Transverse colon (tissue), 4 donors: ENCODE measurements at regions of chr19 and their contacts with region 1.

Region 1: GRCh38 chr19:50357178-50358100 is 8.0 kb downstream of the NAPSA start:
- DNase-seq: peak; percentile 79
- H3K4me3 ChIP-seq: peak overlapping the region in 3 of 4 donors; percentile 13 to 52 (median 34)
- H3K27ac ChIP-seq: peak overlapping the region; percentile 79 to 84 (median 81)
- H3K4me1 ChIP-seq: peaks cover 0 to 11% (median 9%) of the 10 kb centered on the region in 4 donors
- H3K27me3 ChIP-seq: no peaks in the 10 kb centered on the region
- CTCF ChIP-seq: peak; percentile 88 to 93 (median 92)
- EP300 ChIP-seq: no peak
- POLR2A ChIP-seq: peak; percentile 14

Region 2: DNA sequence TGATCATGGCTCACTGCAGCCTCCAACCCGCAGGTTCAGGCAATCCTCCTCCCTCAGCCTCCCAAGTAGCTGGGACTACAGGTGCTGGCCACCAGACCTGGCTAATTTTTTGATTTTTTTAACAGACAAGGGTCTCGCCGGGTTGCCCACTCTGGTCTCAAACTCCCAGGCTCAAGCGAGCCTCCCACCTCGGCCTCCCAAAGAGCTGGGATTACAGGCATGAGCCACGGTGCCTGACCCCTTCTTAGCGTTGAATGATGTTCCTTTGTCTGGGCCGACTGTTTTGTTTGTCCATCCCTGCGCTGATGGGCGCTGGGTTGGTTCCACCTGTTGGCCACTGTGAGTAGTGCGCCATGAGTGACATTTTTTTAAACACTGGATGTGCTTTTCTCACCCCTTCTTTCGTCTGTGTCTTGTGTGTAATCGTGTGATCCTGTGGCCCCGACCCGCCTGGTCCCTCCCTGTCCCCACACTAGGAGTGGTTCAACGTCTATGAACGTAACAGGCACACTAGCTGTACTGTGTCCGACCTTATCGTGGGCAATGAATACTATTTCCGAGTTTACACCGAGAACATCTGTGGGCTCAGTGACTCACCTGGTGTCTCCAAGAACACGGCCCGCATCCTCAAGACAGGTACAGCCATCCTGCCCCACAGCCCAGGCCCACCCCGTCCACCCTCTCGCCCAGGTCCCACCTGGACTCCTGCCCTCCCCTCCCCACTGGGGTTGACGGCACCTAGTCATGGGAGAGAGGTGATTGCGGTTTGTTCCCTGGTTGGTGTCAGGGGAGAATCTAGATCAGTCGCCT is 103.8 kb after region 1 on chr19:
- in situ Hi-C with region 1: loop called in 3 of 4 experiments (anchors 10 to 25 kb)
- intact Hi-C with region 1: no loop called
- DNase-seq: peak; percentile 73
- H3K4me3 ChIP-seq: no peak overlapping the region
- H3K27ac ChIP-seq: no peak overlapping the region
- H3K4me1 ChIP-seq: peaks cover 0 to under 1% (median 0%) of the 10 kb centered on the region in 4 donors
- H3K27me3 ChIP-seq: peaks cover 25% of the 10 kb centered on the region
- CTCF ChIP-seq: peak; percentile 77 to 92 (median 87)
- EP300 ChIP-seq: no peak
- POLR2A ChIP-seq: no peak

Region 3: GRCh38 chr19:50779504-50780457 is 422.3 kb after region 1 on chr19:
- in situ Hi-C with region 1: loop called in 3 of 4 experiments (anchors 10 kb)
- intact Hi-C with region 1: no loop called
- DNase-seq: no peak
- H3K4me3 ChIP-seq: no peak overlapping the region
- H3K27ac ChIP-seq: no peak overlapping the region
- H3K4me1 ChIP-seq: peaks cover 0 to 6% (median 2%) of the 10 kb centered on the region in 4 donors
- H3K27me3 ChIP-seq: peaks cover 85% of the 10 kb centered on the region
- CTCF ChIP-seq: no peak
- EP300 ChIP-seq: no peak
- POLR2A ChIP-seq: no peak